OCI-LY7 (cell line): ENCODE measurements at regions of chr7 and their contacts with region 1.

Region 1: DNA sequence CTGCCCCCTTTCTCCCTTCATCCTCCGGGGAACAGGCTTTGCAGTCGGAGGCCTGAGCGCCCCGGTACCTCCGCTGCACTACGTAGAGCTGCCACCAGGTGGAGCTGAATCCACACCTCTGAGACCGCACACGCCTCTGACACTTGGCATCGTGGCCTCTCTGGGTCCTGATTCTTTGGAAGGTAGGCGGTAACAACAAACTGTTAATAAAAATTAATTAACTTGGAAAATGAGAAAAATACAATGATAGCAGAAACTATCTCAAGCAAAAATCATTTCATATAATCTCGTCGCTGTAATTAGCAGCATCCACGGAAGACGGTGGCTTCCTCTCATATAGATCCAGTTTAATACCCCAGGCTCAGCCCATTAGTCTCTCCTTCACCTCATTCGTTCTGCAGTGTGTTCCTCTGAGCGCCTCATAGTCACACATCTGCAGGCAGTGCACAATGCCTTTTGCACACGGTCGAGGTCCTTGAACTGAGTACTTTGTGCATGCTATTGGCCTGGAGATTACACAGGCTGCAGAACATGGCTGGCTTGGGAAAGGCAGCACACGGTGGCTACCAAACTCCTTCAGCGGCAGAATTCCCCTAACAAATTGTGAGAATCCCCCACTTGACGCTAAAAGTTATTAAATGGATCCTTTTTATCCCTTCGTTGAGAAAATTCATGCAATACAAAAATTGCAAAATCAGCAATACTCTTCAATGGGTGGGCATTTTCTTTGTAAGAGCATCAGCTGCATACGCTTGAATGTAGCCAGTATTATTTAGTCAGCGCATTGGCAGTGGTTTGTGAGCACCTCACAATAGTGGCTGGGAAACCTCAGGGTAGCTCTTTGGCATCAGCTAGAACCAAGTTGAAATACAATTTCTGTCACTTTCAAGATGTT is 18.7 kb downstream of the OR9A2 start:
- DNase-seq: peak; percentile 77
- H3K4me3 ChIP-seq: no peak overlapping the region
- H3K27ac ChIP-seq: no peak overlapping the region
- H3K4me1 ChIP-seq: peaks cover 44% of the 10 kb centered on the region
- CTCF ChIP-seq: peak; percentile 99

Region 2: DNA sequence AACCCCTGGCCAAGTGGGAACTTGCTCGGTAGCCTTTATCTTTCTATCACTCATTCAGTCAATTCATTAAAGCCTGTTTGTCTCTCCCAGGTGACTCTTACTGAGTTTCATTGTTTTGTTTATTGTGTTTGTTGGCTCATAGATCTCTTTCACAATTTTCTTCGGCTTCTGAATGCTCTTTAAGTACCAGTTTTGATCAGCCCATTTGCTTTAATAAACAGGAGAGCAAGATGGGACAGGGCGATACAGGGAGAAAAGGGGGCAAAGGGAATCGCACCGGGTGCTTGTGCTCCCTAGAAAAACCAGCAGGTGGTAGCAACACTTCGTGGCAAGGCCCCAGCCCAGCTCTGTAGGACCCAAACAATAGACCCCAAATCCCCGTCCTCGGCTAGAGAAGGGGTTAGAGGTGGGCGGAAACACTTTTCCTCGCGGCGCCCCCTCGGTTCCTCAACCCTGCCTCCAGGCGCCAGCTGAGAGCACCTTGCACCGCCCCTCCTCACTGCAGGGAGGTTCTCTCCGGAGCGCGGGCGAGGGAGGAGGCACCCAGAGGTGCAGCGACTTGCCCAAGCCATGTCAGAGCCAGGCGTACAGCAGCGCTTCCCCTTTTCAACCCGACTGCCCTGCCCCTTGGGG is 154.4 kb before region 1 on chr7:
- CTCF ChIA-PET with region 1: interaction called, 3 read pairs
- POLR2A ChIA-PET with region 1: no interaction called
- intact Hi-C with region 1: loop called (anchors 1 kb)
- DNase-seq: peak; percentile 80
- H3K4me3 ChIP-seq: peak overlapping the region; percentile 73
- H3K27ac ChIP-seq: no peak overlapping the region
- H3K4me1 ChIP-seq: peaks cover 6% of the 10 kb centered on the region
- CTCF ChIP-seq: peak; percentile 90

Region 3: GRCh38 chr7:142880876-142881505 is 127.3 kb before region 1 on chr7:
- CTCF ChIA-PET with region 1: interaction called, 6 read pairs
- POLR2A ChIA-PET with region 1: no interaction called
- intact Hi-C with region 1: loop called (anchors 2 kb)
- DNase-seq: peak; percentile 53
- H3K4me3 ChIP-seq: no peak overlapping the region
- H3K27ac ChIP-seq: no peak overlapping the region
- H3K4me1 ChIP-seq: no peaks in the 10 kb centered on the region
- CTCF ChIP-seq: peak; percentile 87